CD8-positive, alpha-beta memory T cell (primary cell): ENCODE measurements at regions of chr6 and their contacts with region 1.

Region 1: DNA sequence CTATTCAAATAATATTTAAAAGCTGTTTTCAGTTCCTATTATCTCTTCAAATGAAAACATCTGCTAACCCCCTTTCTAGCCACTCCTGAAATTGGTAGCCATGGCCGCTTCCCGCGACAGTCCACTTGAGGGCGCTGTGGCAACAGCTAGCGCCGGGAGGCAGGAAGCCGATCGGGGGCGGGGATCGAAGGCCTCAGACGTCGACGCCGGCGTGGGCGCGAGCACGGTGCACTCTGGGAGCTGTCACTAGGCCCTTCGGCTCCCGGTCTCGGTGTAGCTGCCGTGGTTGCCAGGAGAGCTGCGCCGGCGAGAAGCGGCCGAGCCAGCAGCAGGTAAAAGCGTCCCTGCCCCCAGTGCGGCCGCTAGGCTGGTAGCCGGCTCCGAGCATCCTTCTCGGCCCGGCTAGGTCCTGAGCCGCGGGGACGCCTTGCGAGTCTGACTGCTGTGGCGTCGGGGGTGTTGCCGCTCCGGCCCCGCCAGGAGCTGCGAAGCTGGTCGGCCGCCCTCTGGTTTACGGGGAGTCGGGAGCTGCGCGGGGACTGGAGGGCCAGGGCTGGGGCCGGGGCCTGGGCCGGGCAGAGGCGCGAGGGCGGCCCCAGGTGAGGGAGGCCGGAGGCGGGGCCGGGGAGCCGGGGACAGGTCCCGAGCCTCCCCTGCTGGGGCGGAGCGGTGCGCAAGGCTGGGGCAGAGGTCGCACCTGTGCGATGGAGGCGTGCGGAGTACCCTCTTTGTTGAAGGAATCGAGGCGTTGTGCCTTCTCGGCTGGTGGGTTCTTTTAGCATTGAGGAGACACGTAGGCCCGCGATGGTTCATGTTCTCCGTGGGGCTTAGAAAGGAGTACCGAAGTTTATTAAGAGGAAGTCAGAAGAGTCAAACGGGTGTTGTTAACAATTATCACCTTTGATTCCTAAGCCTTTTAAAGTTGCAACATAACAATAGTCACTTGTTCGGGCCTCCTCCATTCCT is at the start of gene DOP1A:
- DNase-seq: peak; percentile 91 to 95 (median 93)
- H3K4me3 ChIP-seq: peak within 1 kb of the TSS; percentile 76
- H3K4me3 Mint-ChIP-seq: peak within 1 kb of the TSS; percentile 92 to 99 (median 95)
- H3K27ac ChIP-seq: peak within 1 kb of the TSS; percentile 76
- H3K27ac Mint-ChIP-seq: peak within 1 kb of the TSS; percentile 86 to 99 (median 96)
- H3K4me1 ChIP-seq: peaks cover 21% of the 10 kb centered on the region
- H3K4me1 Mint-ChIP-seq: peaks cover 41 to 75% (median 54%) of the 10 kb centered on the region in 3 donors
- H3K27me3 ChIP-seq: no peaks in the 10 kb centered on the region
- H3K27me3 Mint-ChIP-seq: no peaks in the 10 kb centered on the region
- total RNA-seq, gene DOP1A: 8.5 to 9.7 TPM

Region 2: DNA sequence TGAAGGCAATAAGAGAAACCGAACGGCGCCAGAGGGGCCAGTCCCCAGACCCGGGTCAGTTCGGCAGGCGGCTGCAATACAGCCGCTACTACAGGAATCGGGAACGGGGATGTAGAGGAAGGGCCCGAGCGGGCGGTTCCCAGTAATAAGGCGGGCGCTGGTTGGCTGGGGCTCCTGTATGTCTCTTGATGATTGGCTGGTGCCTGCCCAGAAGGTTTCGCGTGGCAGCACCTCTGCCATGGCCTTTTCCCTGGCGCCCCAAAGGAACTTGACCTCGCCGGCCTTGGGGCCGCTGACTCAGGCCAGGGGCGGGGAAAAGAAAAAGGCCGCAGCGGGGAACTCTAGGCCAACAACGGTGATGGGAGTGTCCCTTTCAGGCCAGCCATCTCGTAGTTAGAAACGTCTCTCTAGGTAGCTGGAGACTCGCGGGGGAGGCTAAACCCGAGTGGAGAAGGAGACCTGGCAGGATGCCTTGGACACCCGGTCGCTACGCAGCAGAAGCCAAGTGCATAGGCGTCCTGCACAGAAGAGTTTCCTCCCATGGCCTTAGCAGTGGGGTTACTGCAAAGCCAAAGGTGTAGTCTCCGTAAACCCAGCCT is 820.0 kb before region 1 on chr6 and contains the start of gene IBTK:
- CTCF ChIA-PET with region 1: interaction called, 41 read pairs
- POLR2A ChIA-PET with region 1: interaction called, 7 read pairs
- DNase-seq: peak; percentile 83 to 94 (median 90)
- H3K4me3 ChIP-seq: peak within 1 kb of the TSS; percentile 91
- H3K4me3 Mint-ChIP-seq: peak within 1 kb of the TSS; percentile 96 to 99 (median 98)
- H3K27ac ChIP-seq: peak within 1 kb of the TSS; percentile 80
- H3K27ac Mint-ChIP-seq: peak within 1 kb of the TSS; percentile 96 to 99 (median 98)
- H3K4me1 ChIP-seq: peaks cover 29% of the 10 kb centered on the region
- H3K4me1 Mint-ChIP-seq: peaks cover 42 to 48% (median 46%) of the 10 kb centered on the region in 3 donors
- H3K27me3 ChIP-seq: no peaks in the 10 kb centered on the region
- H3K27me3 Mint-ChIP-seq: no peaks in the 10 kb centered on the region
- total RNA-seq, gene IBTK: 24.2 to 26.6 TPM

Region 3: GRCh38 chr6:82842721-82843120 is 225.0 kb before region 1 on chr6:
- CTCF ChIA-PET with region 1: no interaction called
- POLR2A ChIA-PET with region 1: no interaction called
- DNase-seq: no peak
- H3K4me3 ChIP-seq: no peak overlapping the region
- H3K4me3 Mint-ChIP-seq: no peak overlapping the region
- H3K27ac ChIP-seq: no peak overlapping the region
- H3K27ac Mint-ChIP-seq: no peak overlapping the region
- H3K4me1 ChIP-seq: no peaks in the 10 kb centered on the region
- H3K4me1 Mint-ChIP-seq: no peaks in the 10 kb centered on the region
- H3K27me3 ChIP-seq: no peaks in the 10 kb centered on the region
- H3K27me3 Mint-ChIP-seq: no peaks in the 10 kb centered on the region

Region 4: DNA sequence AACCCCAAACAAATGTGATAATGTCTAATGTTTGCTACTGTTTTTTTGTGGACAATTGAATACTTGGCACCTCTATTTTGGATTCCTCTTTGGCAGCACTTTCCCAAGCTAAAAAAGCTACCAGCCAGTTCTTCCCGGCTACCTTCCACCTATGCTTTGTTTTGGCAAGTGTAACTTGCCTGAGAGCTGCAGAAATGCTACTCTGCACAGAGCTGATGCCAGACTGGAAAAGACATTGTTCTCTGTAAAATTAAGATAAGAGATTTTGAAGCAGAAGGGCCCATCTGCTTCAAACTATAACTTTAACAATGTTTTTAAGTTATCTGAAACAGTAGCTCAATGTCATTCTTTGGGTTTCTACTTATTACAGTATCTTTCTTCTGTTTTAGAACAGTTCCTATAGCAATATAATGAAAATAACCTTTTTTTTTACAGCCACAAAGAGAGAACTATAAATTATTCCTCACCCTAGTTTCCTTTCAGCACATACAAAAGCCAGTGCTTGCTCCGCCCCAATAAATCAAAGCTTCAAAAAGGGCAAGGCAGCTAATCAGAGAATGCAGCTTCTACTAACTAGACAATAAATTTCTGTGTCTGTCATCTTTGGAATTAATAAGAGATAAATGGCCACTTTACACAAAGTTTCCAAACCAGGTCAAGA is 185.2 kb before region 1 on chr6:
- CTCF ChIA-PET with region 1: no interaction called
- POLR2A ChIA-PET with region 1: no interaction called
- DNase-seq: no peak
- H3K4me3 ChIP-seq: no peak overlapping the region
- H3K4me3 Mint-ChIP-seq: no peak overlapping the region
- H3K27ac ChIP-seq: no peak overlapping the region
- H3K27ac Mint-ChIP-seq: no peak overlapping the region
- H3K4me1 ChIP-seq: no peaks in the 10 kb centered on the region
- H3K4me1 Mint-ChIP-seq: no peaks in the 10 kb centered on the region
- H3K27me3 ChIP-seq: no peaks in the 10 kb centered on the region
- H3K27me3 Mint-ChIP-seq: no peaks in the 10 kb centered on the region

Region 5: GRCh38 chr6:83008663-83009062 is 59.1 kb before region 1 on chr6:
- CTCF ChIA-PET with region 1: no interaction called
- POLR2A ChIA-PET with region 1: no interaction called
- DNase-seq: no peak
- H3K4me3 ChIP-seq: no peak overlapping the region
- H3K4me3 Mint-ChIP-seq: no peak overlapping the region
- H3K27ac ChIP-seq: no peak overlapping the region
- H3K27ac Mint-ChIP-seq: peak overlapping the region in 3 of 8 donors; percentile 37 to 64 (median 46)
- H3K4me1 ChIP-seq: peaks cover 3% of the 10 kb centered on the region
- H3K4me1 Mint-ChIP-seq: peaks cover 13 to 21% (median 14%) of the 10 kb centered on the region in 3 donors
- H3K27me3 ChIP-seq: no peaks in the 10 kb centered on the region
- H3K27me3 Mint-ChIP-seq: no peaks in the 10 kb centered on the region

Region 6: GRCh38 chr6:83047065-83047754 is 20.5 kb before region 1 on chr6:
- CTCF ChIA-PET with region 1: interaction called, 85 read pairs
- POLR2A ChIA-PET with region 1: no interaction called
- DNase-seq: no peak
- H3K4me3 ChIP-seq: no peak overlapping the region
- H3K4me3 Mint-ChIP-seq: no peak overlapping the region
- H3K27ac ChIP-seq: no peak overlapping the region
- H3K27ac Mint-ChIP-seq: peak overlapping the region in 1 of 8 donors; percentile 47
- H3K4me1 ChIP-seq: no peaks in the 10 kb centered on the region
- H3K4me1 Mint-ChIP-seq: no peaks in the 10 kb centered on the region
- H3K27me3 ChIP-seq: no peaks in the 10 kb centered on the region
- H3K27me3 Mint-ChIP-seq: no peaks in the 10 kb centered on the region

Region 7: GRCh38 chr6:83092756-83093399 is 25.1 kb after region 1 on chr6:
- CTCF ChIA-PET with region 1: interaction called, 12 read pairs
- POLR2A ChIA-PET with region 1: no interaction called
- DNase-seq: no peak
- H3K4me3 ChIP-seq: no peak overlapping the region
- H3K4me3 Mint-ChIP-seq: no peak overlapping the region
- H3K27ac ChIP-seq: no peak overlapping the region
- H3K27ac Mint-ChIP-seq: no peak overlapping the region
- H3K4me1 ChIP-seq: no peaks in the 10 kb centered on the region
- H3K4me1 Mint-ChIP-seq: peaks cover 8 to 50% (median 50%) of the 10 kb centered on the region in 3 donors
- H3K27me3 ChIP-seq: no peaks in the 10 kb centered on the region
- H3K27me3 Mint-ChIP-seq: no peaks in the 10 kb centered on the region

Region 8: GRCh38 chr6:83192871-83193746 is 125.4 kb after region 1 on chr6 and contains the starts of genes PGM3 and RWDD2A:
- CTCF ChIA-PET with region 1: interaction called, 31 read pairs
- POLR2A ChIA-PET with region 1: interaction called, 4 read pairs
- DNase-seq: peak; percentile 87 to 93 (median 89)
- H3K4me3 ChIP-seq: peak within 1 kb of the TSS; percentile 88
- H3K4me3 Mint-ChIP-seq: peak within 1 kb of the TSS; percentile 97 to 99 (median 98)
- H3K27ac ChIP-seq: peak within 1 kb of the TSS; percentile 85
- H3K27ac Mint-ChIP-seq: peak within 1 kb of the TSS; percentile 85 to 99 (median 98)
- H3K4me1 ChIP-seq: peaks cover 15% of the 10 kb centered on the region
- H3K4me1 Mint-ChIP-seq: peaks cover 42 to 65% (median 62%) of the 10 kb centered on the region in 3 donors
- H3K27me3 ChIP-seq: no peaks in the 10 kb centered on the region
- H3K27me3 Mint-ChIP-seq: no peaks in the 10 kb centered on the region
- total RNA-seq, gene PGM3: 18.7 to 19.8 TPM
- total RNA-seq, gene RWDD2A: 1.3 TPM

Region 9: DNA sequence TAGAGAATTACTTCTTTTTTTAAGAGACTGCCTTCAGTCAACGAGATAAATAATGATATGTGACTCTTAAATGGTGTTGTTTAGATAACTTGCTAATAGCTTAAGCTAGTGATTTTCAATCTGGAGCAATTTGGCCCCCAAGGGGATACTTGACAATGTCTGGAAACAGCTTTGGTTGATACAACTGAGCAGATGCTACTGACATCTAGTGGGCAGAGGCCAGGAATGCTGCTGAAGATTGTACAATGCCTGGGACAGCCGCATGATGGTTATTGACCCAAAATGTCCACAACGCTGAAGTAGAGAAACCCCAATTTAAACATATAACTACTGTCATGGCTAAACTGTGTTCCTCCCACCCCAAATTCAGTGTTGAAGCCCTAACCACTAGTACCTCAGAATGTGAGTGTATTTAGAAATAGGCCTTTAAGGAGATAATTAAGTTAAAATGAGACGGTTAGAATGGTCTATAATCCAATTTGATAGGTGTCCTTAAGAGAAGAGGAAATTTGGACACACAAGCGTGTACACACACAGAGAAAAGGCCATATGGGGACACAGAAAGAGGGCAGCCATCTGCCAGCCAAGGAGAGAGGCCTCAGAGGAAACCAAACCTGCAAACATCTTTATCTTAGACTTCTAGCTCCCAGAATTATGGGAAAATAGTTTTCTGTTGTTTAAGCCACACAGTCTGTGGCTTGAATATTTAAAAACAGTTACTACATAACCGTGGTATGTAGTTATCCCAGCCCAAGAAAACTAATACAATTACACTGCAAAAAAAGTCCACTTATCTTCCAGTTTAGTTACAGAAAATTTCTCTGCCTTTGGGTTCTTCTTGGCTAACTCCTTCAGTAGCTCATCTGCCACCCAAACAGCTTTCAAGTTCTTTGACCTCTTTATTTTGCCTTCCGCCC is 147.7 kb after region 1 on chr6:
- CTCF ChIA-PET with region 1: interaction called, 88 read pairs
- POLR2A ChIA-PET with region 1: interaction called, 3 read pairs
- DNase-seq: peak in 4 of 5 donors; percentile 22 to 68 (median 40)
- H3K4me3 ChIP-seq: no peak overlapping the region
- H3K4me3 Mint-ChIP-seq: no peak overlapping the region
- H3K27ac ChIP-seq: no peak overlapping the region
- H3K27ac Mint-ChIP-seq: peak overlapping the region in 1 of 8 donors; percentile 47
- H3K4me1 ChIP-seq: no peaks in the 10 kb centered on the region
- H3K4me1 Mint-ChIP-seq: no peaks in the 10 kb centered on the region
- H3K27me3 ChIP-seq: peaks cover 6% of the 10 kb centered on the region
- H3K27me3 Mint-ChIP-seq: peaks cover 8 to 16% of the 10 kb centered on the region in 2 donors

Region 10: GRCh38 chr6:83859410-83860358 is 792.0 kb after region 1 on chr6 and contains the start of gene CYB5R4:
- CTCF ChIA-PET with region 1: interaction called, 10 read pairs
- POLR2A ChIA-PET with region 1: no interaction called
- DNase-seq: peak; percentile 87 to 96 (median 93)
- H3K4me3 ChIP-seq: peak within 1 kb of the TSS; percentile 90
- H3K4me3 Mint-ChIP-seq: peak within 1 kb of the TSS; percentile 91 to 99 (median 96)
- H3K27ac ChIP-seq: peak within 1 kb of the TSS; percentile 86
- H3K27ac Mint-ChIP-seq: peak within 1 kb of the TSS; percentile 75 to 97 (median 91)
- H3K4me1 ChIP-seq: peaks cover 27% of the 10 kb centered on the region
- H3K4me1 Mint-ChIP-seq: peaks cover 32 to 52% (median 43%) of the 10 kb centered on the region in 3 donors
- H3K27me3 ChIP-seq: peaks cover 8% of the 10 kb centered on the region
- H3K27me3 Mint-ChIP-seq: peaks cover 9 to 11% of the 10 kb centered on the region in 2 donors
- total RNA-seq, gene CYB5R4: 31.6 to 33.6 TPM